Tibial artery (tissue), 4 donors: ENCODE measurements at regions of chr16 and their contacts with region 1.

Region 1: GRCh38 chr16:30984669-30985400 is at the start of gene HSD3B7:
- DNase-seq: peak; percentile 91 to 93
- H3K4me3 ChIP-seq: peak within 1 kb of the TSS; percentile 40 to 55
- H3K27ac ChIP-seq: peak within 1 kb of the TSS in 1 of 2 donors; percentile 33
- H3K4me1 ChIP-seq: peaks cover 0 to 15% (median 11%) of the 10 kb centered on the region in 4 donors
- H3K27me3 ChIP-seq: no peaks in the 10 kb centered on the region
- CTCF ChIP-seq: peak; percentile 92 to 95

Region 2: GRCh38 chr16:30941600-30942425 is 43.0 kb before region 1 on chr16:
- intact Hi-C with region 1: no loop called
- DNase-seq: peak in 1 of 2 donors; percentile 80
- H3K4me3 ChIP-seq: no peak overlapping the region
- H3K27ac ChIP-seq: no peak overlapping the region
- H3K4me1 ChIP-seq: peaks cover 0 to 18% (median 7%) of the 10 kb centered on the region in 4 donors
- H3K27me3 ChIP-seq: no peaks in the 10 kb centered on the region
- CTCF ChIP-seq: peak; percentile 74 to 89

Region 3: DNA sequence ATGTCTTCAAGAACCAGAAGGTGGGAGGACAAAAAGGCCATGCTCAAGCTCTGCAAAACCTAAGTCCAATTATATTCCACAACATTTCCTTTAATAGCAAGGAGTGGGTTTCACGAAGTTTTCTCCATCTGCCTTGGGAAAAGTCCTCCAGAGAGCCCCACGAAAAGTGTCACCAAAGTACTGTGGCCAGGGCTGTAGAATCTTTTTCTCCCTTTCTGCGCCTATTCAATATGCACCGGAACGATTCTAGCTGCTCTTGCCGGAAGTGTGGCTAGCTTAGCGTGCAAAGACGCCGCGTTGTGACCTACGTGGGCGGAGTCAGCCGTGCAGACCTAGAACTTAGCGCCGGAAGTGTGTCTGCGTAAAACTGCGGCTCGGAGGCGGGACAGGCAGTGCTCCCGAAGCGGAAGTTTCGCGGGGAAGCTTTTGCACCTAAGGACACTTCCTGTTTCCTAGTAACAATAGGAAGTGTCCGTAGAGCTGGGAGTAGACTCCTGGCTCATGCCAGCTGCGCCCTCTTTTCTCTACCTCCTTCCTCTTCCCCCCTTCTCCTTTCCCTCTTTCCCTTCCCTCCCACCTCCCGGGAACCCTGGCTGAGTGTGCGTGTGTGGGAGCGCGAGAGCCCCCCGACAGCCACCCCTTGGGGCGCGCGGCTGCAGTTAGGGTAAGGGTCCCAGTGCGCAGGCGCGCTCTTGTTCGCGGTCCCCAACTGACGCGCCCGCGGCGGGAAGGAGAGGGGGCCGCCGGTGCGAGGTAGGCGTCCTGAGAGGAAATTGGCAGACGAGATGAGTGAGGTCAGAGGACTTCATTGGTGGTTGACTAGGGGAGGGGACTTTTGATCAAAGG is 89.4 kb after region 1 on chr16 and contains the starts of genes ZNF646 and ZNF668:
- intact Hi-C with region 1: loop called (anchors 5 kb)
- DNase-seq: peak; percentile 99
- H3K4me3 ChIP-seq: peak within 1 kb of the TSS; percentile 90 to 91
- H3K27ac ChIP-seq: peak within 1 kb of the TSS; percentile 89 to 95
- H3K4me1 ChIP-seq: peaks cover 0 to 32% (median 23%) of the 10 kb centered on the region in 4 donors
- H3K27me3 ChIP-seq: no peaks in the 10 kb centered on the region
- CTCF ChIP-seq: no peak

Region 4: DNA sequence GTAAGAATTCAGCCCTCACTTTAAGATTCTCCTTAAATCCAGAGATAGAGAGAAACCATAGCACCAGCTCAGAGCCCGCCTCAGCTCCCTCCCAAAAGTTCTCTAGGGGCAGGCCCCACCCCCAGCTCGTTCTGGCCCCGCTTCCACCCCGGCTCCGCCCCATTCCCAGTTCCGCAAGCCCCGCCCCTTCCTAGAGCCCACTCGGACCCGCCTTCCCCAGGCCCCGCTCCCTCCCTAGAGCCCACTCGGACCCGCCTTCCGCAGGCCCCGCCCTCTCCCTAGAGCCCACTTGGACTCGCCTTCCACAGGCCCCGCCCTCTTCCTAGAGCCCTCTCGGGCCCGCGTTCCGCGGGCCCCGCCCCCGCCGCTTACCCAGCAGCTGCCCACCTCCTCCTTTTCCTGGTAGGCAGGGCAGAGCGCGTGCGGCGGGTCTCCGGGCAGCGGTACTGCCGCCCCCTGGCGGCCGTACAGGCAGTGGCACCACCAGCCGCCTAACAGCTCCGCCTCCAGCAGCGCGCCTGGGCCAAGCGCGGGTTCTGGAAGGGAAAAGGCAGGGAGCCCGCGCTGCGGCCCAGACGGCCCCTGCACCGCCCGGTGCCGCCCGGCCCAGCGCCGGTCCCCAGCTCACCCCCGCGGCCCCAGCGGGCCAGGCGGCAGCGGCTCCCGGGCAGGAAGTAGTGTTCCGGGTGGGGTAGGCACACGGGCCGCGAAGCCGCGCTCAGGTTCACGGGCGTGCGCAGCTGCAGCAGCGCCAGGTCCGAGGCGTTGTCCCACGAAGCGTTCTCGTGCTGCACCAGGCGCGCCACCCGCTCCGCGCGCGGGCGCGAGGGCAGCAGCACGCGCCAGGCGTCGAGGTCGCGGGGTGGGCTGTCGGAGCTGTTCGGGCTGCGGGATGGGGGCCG is 157.5 kb after region 1 on chr16:
- intact Hi-C with region 1: loop called (anchors 10 kb)
- DNase-seq: peak; percentile 99 to 100
- H3K4me3 ChIP-seq: peak overlapping the region; percentile 51 to 64
- H3K27ac ChIP-seq: peak overlapping the region; percentile 73 to 78
- H3K4me1 ChIP-seq: peaks cover 4 to 33% (median 19%) of the 10 kb centered on the region in 4 donors
- H3K27me3 ChIP-seq: peaks cover 0 to 10% of the 10 kb centered on the region in 2 donors
- CTCF ChIP-seq: peak; percentile 96 to 99

Region 5: GRCh38 chr16:31301708-31302400 is 317.0 kb after region 1 on chr16:
- intact Hi-C with region 1: loop called (anchors 10 kb)
- DNase-seq: peak in 1 of 2 donors; percentile 33
- H3K4me3 ChIP-seq: no peak overlapping the region
- H3K27ac ChIP-seq: peak overlapping the region in 1 of 2 donors; percentile 8
- H3K4me1 ChIP-seq: peaks cover 0 to 10% (median 0%) of the 10 kb centered on the region in 4 donors
- H3K27me3 ChIP-seq: peaks cover 0 to 4% of the 10 kb centered on the region in 2 donors
- CTCF ChIP-seq: no peak

Region 6: GRCh38 chr16:31440516-31441184 is 455.8 kb after region 1 on chr16:
- intact Hi-C with region 1: loop called (anchors 1 kb)
- DNase-seq: peak in 1 of 2 donors; percentile 31
- H3K4me3 ChIP-seq: no peak overlapping the region
- H3K27ac ChIP-seq: no peak overlapping the region
- H3K4me1 ChIP-seq: peaks cover 0 to 11% (median 3%) of the 10 kb centered on the region in 4 donors
- H3K27me3 ChIP-seq: no peaks in the 10 kb centered on the region
- CTCF ChIP-seq: no peak

Region 7: GRCh38 chr16:31873556-31874365 is 888.9 kb after region 1 on chr16 and contains the start of gene ZNF267:
- intact Hi-C with region 1: loop called (anchors 10 kb)
- DNase-seq: peak; percentile 97 to 98
- H3K4me3 ChIP-seq: peak within 1 kb of the TSS; percentile 98
- H3K27ac ChIP-seq: peak within 1 kb of the TSS; percentile 92 to 94
- H3K4me1 ChIP-seq: peaks cover 0 to 49% (median 29%) of the 10 kb centered on the region in 4 donors
- H3K27me3 ChIP-seq: no peaks in the 10 kb centered on the region
- CTCF ChIP-seq: no peak